ENCODE measurements at regions of chr10 and their contacts with region 1.

Region 1: GRCh38 chr10:72379776-72380175 is 25.1 kb upstream of the DNAJB12 start:
- DNase-seq: no peak
- ATAC-seq: no peak

Region 2: GRCh38 chr10:72542396-72542815 is 162.6 kb after region 1 on chr10:
- intact Hi-C with region 1: loop called in 1 of 2 experiments (anchors 10 kb)
- DNase-seq: peak; percentile 22
- ATAC-seq: peak in 1 of 2 donors; percentile 73

Measured in left cardiac atrium (tissue), 4 donors.